AG04449 (cell line): ENCODE measurements at regions of chr13 and their contacts with region 1.

Region 1: GRCh38 chr13:102928941-102929675 is 83.3 kb downstream of the ERCC5 start:
- DNase-seq: no peak
- H3K4me3 ChIP-seq: no peak overlapping the region
- CTCF ChIP-seq: no peak

Region 2: DNA sequence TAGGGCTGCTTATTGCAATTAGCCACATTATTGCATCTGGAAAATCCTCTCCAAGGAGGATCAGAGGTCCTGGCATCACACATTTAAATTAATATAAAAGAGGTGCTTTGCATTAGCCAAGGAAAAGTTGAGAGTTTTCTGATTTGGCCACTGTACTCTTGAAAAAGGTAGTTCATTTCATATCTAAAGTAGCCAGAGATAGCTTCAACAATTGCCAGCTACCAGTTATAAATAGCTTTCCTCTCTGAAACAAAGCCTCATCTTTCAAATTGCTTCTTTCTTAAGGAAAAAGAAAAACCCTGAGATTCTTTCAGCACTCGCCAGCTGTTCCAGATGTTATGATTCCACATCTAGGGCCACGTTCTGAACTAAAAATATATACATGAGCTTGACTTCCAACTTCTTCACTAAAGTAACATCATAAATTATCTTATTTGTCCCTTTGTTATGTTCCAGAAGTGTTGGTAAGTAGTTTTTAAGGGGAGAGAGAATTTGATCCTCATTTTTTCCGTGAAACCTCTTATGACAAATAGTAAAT is 13.6 kb before region 1 on chr13:
- CTCF ChIA-PET with region 1: interaction called, 13 read pairs
- POLR2A ChIA-PET with region 1: no interaction called
- DNase-seq: no peak
- H3K4me3 ChIP-seq: no peak overlapping the region
- CTCF ChIP-seq: no peak